Heart right ventricle (tissue), 16 donors: ENCODE measurements at regions of chr3 and their contacts with region 1.

Region 1: GRCh38 chr3:134473868-134474546 is 11.8 kb downstream of the ANAPC13 start:
- DNase-seq: peak in 1 of 2 donors; percentile 86
- ATAC-seq: peak in 6 of 8 donors; percentile 23 to 66 (median 58)
- H3K4me3 ChIP-seq: no peak overlapping the region
- H3K27ac ChIP-seq: no peak overlapping the region
- H3K4me1 ChIP-seq: peaks cover 0 to 37% (median 20%) of the 10 kb centered on the region in 9 donors
- H3K27me3 ChIP-seq: no peaks in the 10 kb centered on the region
- CTCF ChIP-seq: peak; percentile 77 to 90 (median 82)

Region 2: GRCh38 chr3:133573054-133573628 is 900.9 kb before region 1 on chr3:
- intact Hi-C with region 1: no loop called
- DNase-seq: peak; percentile 100
- ATAC-seq: peak; percentile 92 to 98 (median 96)
- H3K4me3 ChIP-seq: peak overlapping the region in 9 of 10 donors; percentile 66 to 91 (median 82)
- H3K27ac ChIP-seq: peak overlapping the region; percentile 94 to 98 (median 96)
- H3K4me1 ChIP-seq: peaks cover 5 to 74% (median 53%) of the 10 kb centered on the region in 9 donors
- H3K27me3 ChIP-seq: no peaks in the 10 kb centered on the region
- CTCF ChIP-seq: peak in 6 of 9 donors; percentile 7 to 48 (median 34)

Region 3: GRCh38 chr3:134197681-134198261 is 276.2 kb before region 1 on chr3:
- intact Hi-C with region 1: loop called in 1 of 10 experiments (anchors 10 kb)
- DNase-seq: peak in 1 of 2 donors; percentile 35
- ATAC-seq: peak in 7 of 8 donors; percentile 51 to 88 (median 71)
- H3K4me3 ChIP-seq: no peak overlapping the region
- H3K27ac ChIP-seq: no peak overlapping the region
- H3K4me1 ChIP-seq: peaks cover 0 to 7% (median 0%) of the 10 kb centered on the region in 9 donors
- H3K27me3 ChIP-seq: no peaks in the 10 kb centered on the region
- CTCF ChIP-seq: peak; percentile 45 to 81 (median 74)

Region 4: DNA sequence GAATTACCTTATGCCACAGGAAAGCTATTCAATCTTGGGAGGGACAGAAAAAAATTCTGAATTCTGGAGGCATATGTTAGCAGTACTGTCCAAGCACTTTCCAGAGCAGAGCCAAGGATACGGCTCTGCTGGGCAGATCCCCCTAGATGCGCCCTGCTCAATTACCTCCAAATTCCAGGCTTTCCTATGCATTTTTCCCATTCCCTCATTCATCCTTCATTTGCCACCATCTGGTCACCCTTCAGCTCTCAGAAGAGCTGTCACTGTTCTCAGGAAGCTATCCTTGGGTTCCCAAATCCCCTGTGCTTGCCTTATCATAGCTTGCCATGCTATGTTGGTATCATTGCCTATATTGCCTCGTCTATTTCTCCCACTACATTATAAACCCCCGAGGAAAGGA is 268.6 kb before region 1 on chr3:
- intact Hi-C with region 1: loop called in 7 of 10 experiments (anchors 5 to 10 kb)
- DNase-seq: no peak
- ATAC-seq: no peak
- H3K4me3 ChIP-seq: no peak overlapping the region
- H3K27ac ChIP-seq: no peak overlapping the region
- H3K4me1 ChIP-seq: peaks cover 0 to 9% (median 0%) of the 10 kb centered on the region in 9 donors
- H3K27me3 ChIP-seq: no peaks in the 10 kb centered on the region
- CTCF ChIP-seq: no peak

Region 5: GRCh38 chr3:134308350-134308891 is 165.6 kb before region 1 on chr3:
- intact Hi-C with region 1: loop called (anchors 1 to 5 kb)
- DNase-seq: peak; percentile 76 to 81
- ATAC-seq: peak; percentile 58 to 83 (median 72)
- H3K4me3 ChIP-seq: peak overlapping the region in 6 of 10 donors; percentile 10 to 33 (median 18)
- H3K27ac ChIP-seq: peak overlapping the region in 8 of 10 donors; percentile 50 to 84 (median 76)
- H3K4me1 ChIP-seq: peaks cover 5 to 37% (median 30%) of the 10 kb centered on the region in 9 donors
- H3K27me3 ChIP-seq: peaks cover 0 to 19% (median 0%) of the 10 kb centered on the region in 7 donors
- CTCF ChIP-seq: peak; percentile 97 to 100 (median 99)

Region 6: DNA sequence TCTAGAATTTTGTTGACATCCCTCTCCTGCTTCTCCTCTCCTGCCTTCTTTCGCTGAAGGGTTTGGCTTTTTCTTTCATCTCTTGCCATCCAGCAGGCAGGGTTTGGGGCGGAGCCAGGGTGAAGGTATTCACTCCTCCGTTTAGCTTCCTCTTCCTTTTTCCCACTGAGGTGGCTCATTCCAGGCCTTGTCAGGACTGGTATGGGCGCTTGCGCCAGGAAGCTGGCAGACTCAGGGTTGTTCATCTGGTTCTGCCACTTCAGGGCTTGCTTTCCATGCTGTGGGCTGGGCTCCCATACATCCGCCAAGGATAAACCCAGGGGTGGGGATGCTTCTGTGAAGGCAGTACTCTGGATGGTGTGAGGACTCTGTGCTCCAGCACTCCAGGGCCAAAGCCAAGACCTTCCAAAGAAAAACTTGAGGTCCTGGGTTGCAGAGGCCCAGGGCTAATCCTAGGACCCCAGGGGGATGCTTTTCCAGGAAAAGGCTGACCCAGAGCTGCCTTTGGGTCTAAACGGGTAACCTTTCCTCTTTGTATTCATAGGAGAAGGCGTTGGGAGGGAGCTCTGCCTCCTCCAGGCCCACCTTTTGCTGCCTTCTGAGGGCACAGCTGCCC is 92.1 kb before region 1 on chr3:
- intact Hi-C with region 1: loop called in 8 of 10 experiments (anchors 5 to 10 kb)
- DNase-seq: no peak
- ATAC-seq: no peak
- H3K4me3 ChIP-seq: no peak overlapping the region
- H3K27ac ChIP-seq: peak overlapping the region in 1 of 10 donors; percentile 49
- H3K4me1 ChIP-seq: peaks cover 2 to 16% (median 7%) of the 10 kb centered on the region in 9 donors
- H3K27me3 ChIP-seq: no peaks in the 10 kb centered on the region
- CTCF ChIP-seq: no peak